CD4-positive, alpha-beta T cell (primary cell): ENCODE measurements at regions of chr5 and their contacts with region 1.

Region 1: GRCh38 chr5:84292788-84293653 is 91.7 kb downstream of the EDIL3 start:
- DNase-seq: no peak
- ATAC-seq: no peak
- H3K4me3 ChIP-seq: no peak overlapping the region
- H3K4me3 Mint-ChIP-seq: no peak overlapping the region
- H3K27ac ChIP-seq: no peak overlapping the region
- H3K27ac Mint-ChIP-seq: no peak overlapping the region
- H3K4me1 ChIP-seq: no peaks in the 10 kb centered on the region
- H3K4me1 Mint-ChIP-seq: no peaks in the 10 kb centered on the region
- H3K27me3 ChIP-seq: no peaks in the 10 kb centered on the region
- H3K27me3 Mint-ChIP-seq: no peaks in the 10 kb centered on the region
- CTCF ChIP-seq: no peak

Region 2: DNA sequence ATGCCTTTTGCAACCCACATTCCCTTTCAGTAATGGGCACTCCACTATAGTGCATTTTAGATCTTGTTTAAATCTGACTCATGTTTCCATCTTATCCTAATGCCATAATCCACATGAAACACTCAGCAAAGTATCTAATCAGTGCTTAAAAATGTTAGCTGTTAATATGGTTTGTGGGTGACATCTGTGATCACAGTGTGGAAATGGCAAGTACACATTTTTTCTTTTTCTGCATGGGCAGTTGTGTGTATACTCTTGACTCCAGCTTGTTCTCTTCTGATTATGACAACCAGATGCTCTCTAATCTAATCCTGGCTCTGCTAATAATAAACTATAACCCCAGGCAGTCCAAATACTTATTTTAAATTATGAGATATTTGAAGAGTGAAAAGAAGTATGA is 11.6 kb before region 1 on chr5:
- CTCF ChIA-PET with region 1: no interaction called
- POLR2A ChIA-PET with region 1: no interaction called
- intact Hi-C with region 1: no loop called
- DNase-seq: no peak
- ATAC-seq: no peak
- H3K4me3 ChIP-seq: no peak overlapping the region
- H3K4me3 Mint-ChIP-seq: no peak overlapping the region
- H3K27ac ChIP-seq: no peak overlapping the region
- H3K27ac Mint-ChIP-seq: no peak overlapping the region
- H3K4me1 ChIP-seq: no peaks in the 10 kb centered on the region
- H3K4me1 Mint-ChIP-seq: no peaks in the 10 kb centered on the region
- H3K27me3 ChIP-seq: no peaks in the 10 kb centered on the region
- H3K27me3 Mint-ChIP-seq: no peaks in the 10 kb centered on the region
- CTCF ChIP-seq: no peak

Region 3: DNA sequence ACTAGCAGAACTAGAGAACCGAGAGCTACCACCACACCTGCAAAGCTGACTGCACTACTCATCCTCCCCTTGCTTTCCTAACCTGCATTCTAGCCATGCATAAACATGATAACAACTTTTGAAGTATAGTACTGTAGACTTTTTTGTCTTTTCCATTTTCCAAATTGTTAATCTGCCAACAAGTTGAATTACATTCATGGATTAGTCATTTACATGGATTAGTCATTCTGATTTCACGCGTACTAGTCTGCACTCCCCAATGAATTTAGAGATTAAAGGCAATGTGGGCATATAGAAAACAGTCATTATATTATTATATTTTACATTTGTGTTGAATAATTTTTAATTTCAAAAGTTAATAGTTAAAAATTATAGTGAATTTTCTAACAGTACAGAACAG is 10.3 kb after region 1 on chr5:
- CTCF ChIA-PET with region 1: no interaction called
- POLR2A ChIA-PET with region 1: no interaction called
- intact Hi-C with region 1: loop called in 1 of 2 experiments (anchors 1 kb)
- DNase-seq: no peak
- ATAC-seq: no peak
- H3K4me3 ChIP-seq: no peak overlapping the region
- H3K4me3 Mint-ChIP-seq: no peak overlapping the region
- H3K27ac ChIP-seq: no peak overlapping the region
- H3K27ac Mint-ChIP-seq: no peak overlapping the region
- H3K4me1 ChIP-seq: no peaks in the 10 kb centered on the region
- H3K4me1 Mint-ChIP-seq: no peaks in the 10 kb centered on the region
- H3K27me3 ChIP-seq: no peaks in the 10 kb centered on the region
- H3K27me3 Mint-ChIP-seq: no peaks in the 10 kb centered on the region
- CTCF ChIP-seq: no peak